Activated B cell treated with CpG ODN at 0.5 μM for 24 hours (primary cell): ENCODE measurements at regions of chr7 and their contacts with region 1.

Region 1: GRCh38 chr7:70764701-70765208 is 367.2 kb upstream of the GALNT17 start:
- DNase-seq: no peak
- ATAC-seq: peak; percentile 38
- H3K4me3 Mint-ChIP-seq: peak overlapping the region; percentile 84
- H3K27ac Mint-ChIP-seq: peak overlapping the region; percentile 73
- H3K4me1 Mint-ChIP-seq: peaks cover 36% of the 10 kb centered on the region
- H3K27me3 Mint-ChIP-seq: no peaks in the 10 kb centered on the region
- CTCF ChIP-seq: no peak

Region 2: DNA sequence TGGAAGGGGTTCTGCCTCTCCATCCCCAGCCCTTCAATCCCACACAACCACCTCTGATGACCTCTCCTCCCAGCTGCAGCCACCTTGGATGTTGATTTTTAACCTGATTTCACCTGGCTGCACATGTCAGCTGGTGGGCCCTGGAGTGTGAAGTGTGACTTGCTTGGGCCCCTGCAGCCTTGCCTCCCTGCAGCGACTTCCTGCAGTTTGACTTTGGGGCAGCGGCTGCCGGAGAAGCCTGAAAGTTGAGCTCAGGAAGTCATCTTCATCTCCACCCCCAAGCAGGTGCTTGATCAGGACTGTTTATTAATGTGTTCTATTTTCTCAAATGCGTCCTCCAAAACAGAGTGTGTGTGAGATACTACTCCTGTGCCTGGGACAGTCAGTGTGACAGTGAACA is 308.0 kb before region 1 on chr7:
- CTCF ChIA-PET with region 1: no interaction called
- POLR2A ChIA-PET with region 1: no interaction called
- intact Hi-C with region 1: no loop called
- DNase-seq: no peak
- ATAC-seq: peak; percentile 34
- H3K4me3 Mint-ChIP-seq: peak overlapping the region; percentile 52
- H3K27ac Mint-ChIP-seq: peak overlapping the region; percentile 80
- H3K4me1 Mint-ChIP-seq: peaks cover 51% of the 10 kb centered on the region
- H3K27me3 Mint-ChIP-seq: no peaks in the 10 kb centered on the region
- CTCF ChIP-seq: no peak

Region 3: DNA sequence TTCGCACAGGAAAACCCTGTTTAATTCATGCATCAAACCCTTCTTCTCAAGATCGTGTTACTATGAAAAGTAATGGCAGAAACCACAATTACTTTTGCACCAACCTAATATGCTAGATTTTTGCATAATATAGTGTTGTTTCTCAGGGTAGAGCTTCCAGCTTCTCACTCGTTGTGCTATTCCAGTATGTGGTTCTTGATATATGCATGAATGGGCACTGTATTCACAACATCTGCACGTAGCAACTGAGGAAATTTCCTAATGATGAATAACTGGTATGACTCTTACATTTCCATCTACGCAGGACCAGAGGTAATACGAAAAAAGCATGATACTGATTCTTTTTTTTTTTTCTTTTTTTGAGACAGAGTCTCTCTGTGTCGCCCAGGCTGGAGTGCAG is 40.6 kb after region 1 on chr7:
- CTCF ChIA-PET with region 1: no interaction called
- POLR2A ChIA-PET with region 1: interaction called, 5 read pairs
- intact Hi-C with region 1: loop called (anchors 5 kb)
- DNase-seq: no peak
- ATAC-seq: peak; percentile 45
- H3K4me3 Mint-ChIP-seq: peak overlapping the region; percentile 17
- H3K27ac Mint-ChIP-seq: no peak overlapping the region
- H3K4me1 Mint-ChIP-seq: peaks cover 22% of the 10 kb centered on the region
- H3K27me3 Mint-ChIP-seq: peaks cover 3% of the 10 kb centered on the region
- CTCF ChIP-seq: no peak